ENCODE measurements at regions of chr1 and their contacts with region 1.

Region 1: DNA sequence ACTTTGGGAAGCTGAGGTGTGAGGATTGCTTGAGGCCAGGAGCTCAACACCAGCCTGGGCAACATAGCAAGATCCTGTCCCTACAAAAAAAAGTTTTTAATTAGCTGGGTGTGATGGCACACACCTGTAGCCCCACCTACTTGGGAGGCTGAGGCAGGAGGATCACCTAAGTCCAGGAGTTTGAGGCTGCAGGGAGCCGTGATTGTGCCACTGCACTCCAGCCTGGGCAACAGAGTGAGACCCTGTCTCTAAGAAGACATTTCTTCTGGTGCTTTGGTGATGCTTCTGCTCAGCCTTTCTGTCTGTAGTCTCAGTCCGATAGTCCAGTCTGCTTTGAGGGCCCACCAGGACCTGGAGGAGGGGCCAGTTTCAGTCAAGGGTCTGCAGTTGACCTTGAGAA is 8.3 kb downstream of the PGD start:
- DNase-seq: no peak
- H3K4me3 ChIP-seq: no peak overlapping the region
- H3K27ac ChIP-seq: no peak overlapping the region
- H3K4me1 ChIP-seq: peaks cover 10% of the 10 kb centered on the region
- H3K27me3 ChIP-seq: no peaks in the 10 kb centered on the region
- CTCF ChIP-seq: no peak

Region 2: DNA sequence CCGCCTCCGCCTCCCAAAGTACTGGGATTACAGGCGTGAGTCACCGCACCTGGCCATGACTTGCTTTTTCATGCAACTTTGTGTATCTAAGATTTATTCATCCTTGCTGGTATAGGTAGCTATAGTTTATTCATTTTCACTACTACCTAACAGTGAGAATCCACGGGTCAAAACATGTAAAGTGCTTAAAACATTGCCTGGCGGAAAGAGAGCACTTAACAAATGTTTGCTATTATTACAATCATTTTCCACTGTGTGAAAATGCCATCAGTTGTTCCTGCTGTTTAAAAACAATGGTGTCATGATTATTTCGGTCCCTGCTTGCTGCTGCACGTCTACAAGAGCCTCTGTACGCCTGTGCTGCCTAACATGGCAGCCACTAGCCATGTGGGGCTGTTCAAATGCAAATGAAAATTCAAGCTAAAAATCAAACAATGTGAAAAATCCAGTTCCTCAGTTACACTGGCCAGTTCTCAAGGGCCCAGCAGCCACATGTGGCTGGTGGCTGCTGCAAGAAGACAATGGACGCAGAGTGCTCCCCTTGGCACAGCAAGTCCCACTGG is 648.6 kb before region 1 on chr1:
- CTCF ChIA-PET with region 1: no interaction called
- POLR2A ChIA-PET with region 1: no interaction called
- intact Hi-C with region 1: no loop called
- DNase-seq: no peak
- H3K4me3 ChIP-seq: no peak overlapping the region
- H3K27ac ChIP-seq: no peak overlapping the region
- H3K4me1 ChIP-seq: no peaks in the 10 kb centered on the region
- H3K27me3 ChIP-seq: no peaks in the 10 kb centered on the region
- CTCF ChIP-seq: no peak

Region 3: GRCh38 chr1:10019561-10019960 is 387.6 kb before region 1 on chr1:
- CTCF ChIA-PET with region 1: no interaction called
- POLR2A ChIA-PET with region 1: interaction called, 13 read pairs
- intact Hi-C with region 1: no loop called
- DNase-seq: no peak
- H3K4me3 ChIP-seq: no peak overlapping the region
- H3K27ac ChIP-seq: no peak overlapping the region
- H3K4me1 ChIP-seq: no peaks in the 10 kb centered on the region
- H3K27me3 ChIP-seq: no peaks in the 10 kb centered on the region
- CTCF ChIP-seq: no peak

Region 4: GRCh38 chr1:10267319-10267718 is 139.9 kb before region 1 on chr1:
- CTCF ChIA-PET with region 1: no interaction called
- POLR2A ChIA-PET with region 1: no interaction called
- intact Hi-C with region 1: no loop called
- DNase-seq: no peak
- H3K4me3 ChIP-seq: no peak overlapping the region
- H3K27ac ChIP-seq: no peak overlapping the region
- H3K4me1 ChIP-seq: no peaks in the 10 kb centered on the region
- H3K27me3 ChIP-seq: no peaks in the 10 kb centered on the region
- CTCF ChIP-seq: no peak

Measured in A673 (cell line).